ENCODE measurements at regions of chr17 and their contacts with region 1.

Region 1: DNA sequence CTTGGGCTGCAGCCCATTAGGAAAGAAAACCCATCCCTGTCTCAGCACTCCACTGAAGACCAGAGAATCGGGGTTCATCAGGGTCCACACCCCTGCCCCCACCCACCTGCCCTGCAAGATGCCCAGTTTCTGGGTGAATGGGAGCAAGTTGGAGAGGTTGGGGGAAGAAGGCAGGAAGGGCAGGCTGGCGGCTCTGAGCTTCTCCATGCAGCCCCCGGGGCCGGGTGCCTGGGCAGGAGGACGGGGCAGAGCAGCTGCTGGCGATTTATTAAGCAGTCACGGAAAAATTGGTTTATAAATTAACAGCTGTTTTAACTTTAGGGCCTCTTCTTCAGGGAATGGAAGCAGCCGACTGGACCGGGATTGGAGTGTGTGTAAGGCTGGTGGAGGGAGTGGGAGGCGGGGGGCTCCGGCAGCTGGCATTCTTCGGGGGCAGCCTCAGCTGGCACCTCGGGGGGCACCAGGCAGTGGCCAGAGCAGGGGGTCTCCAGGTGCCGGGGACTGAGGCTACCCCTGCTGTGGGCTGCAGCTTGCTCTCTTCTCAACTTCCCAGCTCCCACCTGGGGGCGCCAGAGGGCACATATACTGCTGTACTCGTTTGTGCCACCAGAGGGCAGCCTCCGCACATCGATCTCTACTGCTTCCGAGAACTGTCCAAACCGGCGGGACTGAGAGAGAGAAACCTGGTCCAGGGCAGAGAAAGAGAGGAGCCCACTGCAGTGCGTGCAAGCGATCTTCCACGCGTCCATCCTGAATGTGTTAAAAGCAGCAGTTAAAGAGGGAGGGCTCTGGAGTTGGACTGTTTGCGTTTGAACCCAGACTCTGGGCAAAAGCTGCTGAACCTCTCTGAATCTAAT is 5.0 kb upstream of the PPP1R1B start:
- DNase-seq: peak; percentile 56
- ATAC-seq: peak; percentile 79
- H3K4me3 ChIP-seq: peak overlapping the region; percentile 46; the same call in 1 of the 2 replicates
- H3K27ac ChIP-seq: no peak overlapping the region
- H3K4me1 ChIP-seq: peaks cover 5% of the 10 kb centered on the region
- H3K27me3 ChIP-seq: peaks cover 3 to 5% of the 10 kb centered on the region in 2 experiments
- CTCF ChIP-seq: peak; percentile 100; a peak in 5 of 6 replicates
- EP300 ChIP-seq: no peak
- POLR2A ChIP-seq: no peak
- RAD21 ChIP-seq: peak; percentile 95

Region 2: DNA sequence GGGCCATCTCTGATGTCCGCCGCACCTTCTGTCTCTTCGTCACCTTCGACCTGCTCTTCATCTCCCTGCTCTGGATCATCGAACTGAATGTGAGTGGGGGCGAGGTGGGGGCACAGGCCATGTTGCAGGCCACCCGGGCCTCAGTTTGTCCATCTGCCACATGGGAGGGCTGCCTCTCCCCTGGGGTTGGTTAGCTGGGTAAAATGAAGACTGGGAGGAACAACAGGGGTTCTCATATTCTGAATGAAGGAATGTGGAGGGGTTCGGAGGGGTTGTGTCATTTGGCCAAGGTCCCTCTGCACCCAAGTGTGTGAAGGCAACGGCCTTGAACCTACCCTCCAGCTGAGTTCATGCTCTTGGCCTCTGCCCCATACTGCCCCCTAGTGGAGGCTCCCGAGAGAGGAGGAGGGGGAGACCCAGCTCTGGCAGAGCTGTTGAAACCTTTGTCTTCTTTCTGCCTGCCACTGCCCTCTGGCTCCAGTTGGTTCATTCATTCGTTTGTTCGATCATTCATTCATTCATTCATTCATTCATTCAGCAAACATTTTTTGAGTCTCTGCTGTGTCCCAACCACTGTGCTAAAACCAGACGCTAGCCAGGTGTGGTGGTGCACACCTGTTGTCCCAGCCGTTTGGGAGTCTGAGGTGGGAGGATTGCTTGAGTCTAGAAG is 32.0 kb after region 1 on chr17:
- CTCF ChIA-PET with region 1: interaction called, 100 read pairs
- POLR2A ChIA-PET with region 1: no interaction called
- RAD21 ChIA-PET with region 1: interaction called, 8 read pairs
- SMC1A ChIA-PET with region 1: interaction called, 11 read pairs
- in situ Hi-C with region 1: no loop called
- intact Hi-C with region 1: no loop called
- DNase-seq: no peak
- ATAC-seq: peak; percentile 98
- H3K4me3 ChIP-seq: no peak overlapping the region
- H3K27ac ChIP-seq: no peak overlapping the region
- H3K4me1 ChIP-seq: peaks cover 5% of the 10 kb centered on the region; the same call in 1 of the 2 replicates
- H3K27me3 ChIP-seq: no peaks in the 10 kb centered on the region
- CTCF ChIP-seq: peak; percentile 74 to 96 (median 96)
- EP300 ChIP-seq: no peak
- POLR2A ChIP-seq: no peak
- RAD21 ChIP-seq: peak; percentile 54

Region 3: GRCh38 chr17:39687811-39688518 is 66.2 kb after region 1 on chr17 and contains the start of gene PGAP3:
- CTCF ChIA-PET with region 1: interaction called, 10 read pairs
- POLR2A ChIA-PET with region 1: no interaction called
- RAD21 ChIA-PET with region 1: interaction called, 3 read pairs
- SMC1A ChIA-PET with region 1: no interaction called
- in situ Hi-C with region 1: no loop called
- intact Hi-C with region 1: no loop called
- DNase-seq: peak; percentile 78
- ATAC-seq: peak; percentile 98
- H3K4me3 ChIP-seq: peak within 1 kb of the TSS; percentile 88
- H3K27ac ChIP-seq: peak within 1 kb of the TSS; percentile 74
- H3K4me1 ChIP-seq: peaks cover 3% of the 10 kb centered on the region; the same call in 1 of the 2 replicates
- H3K27me3 ChIP-seq: no peaks in the 10 kb centered on the region
- CTCF ChIP-seq: peak in 1 of 3 experiments; percentile 10; a peak in 2 of 6 replicates
- EP300 ChIP-seq: no peak
- POLR2A ChIP-seq: peak; percentile 94
- RAD21 ChIP-seq: no peak
- polyA plus RNA-seq, gene PGAP3: 0.21 to 1.2 TPM

Region 4: DNA sequence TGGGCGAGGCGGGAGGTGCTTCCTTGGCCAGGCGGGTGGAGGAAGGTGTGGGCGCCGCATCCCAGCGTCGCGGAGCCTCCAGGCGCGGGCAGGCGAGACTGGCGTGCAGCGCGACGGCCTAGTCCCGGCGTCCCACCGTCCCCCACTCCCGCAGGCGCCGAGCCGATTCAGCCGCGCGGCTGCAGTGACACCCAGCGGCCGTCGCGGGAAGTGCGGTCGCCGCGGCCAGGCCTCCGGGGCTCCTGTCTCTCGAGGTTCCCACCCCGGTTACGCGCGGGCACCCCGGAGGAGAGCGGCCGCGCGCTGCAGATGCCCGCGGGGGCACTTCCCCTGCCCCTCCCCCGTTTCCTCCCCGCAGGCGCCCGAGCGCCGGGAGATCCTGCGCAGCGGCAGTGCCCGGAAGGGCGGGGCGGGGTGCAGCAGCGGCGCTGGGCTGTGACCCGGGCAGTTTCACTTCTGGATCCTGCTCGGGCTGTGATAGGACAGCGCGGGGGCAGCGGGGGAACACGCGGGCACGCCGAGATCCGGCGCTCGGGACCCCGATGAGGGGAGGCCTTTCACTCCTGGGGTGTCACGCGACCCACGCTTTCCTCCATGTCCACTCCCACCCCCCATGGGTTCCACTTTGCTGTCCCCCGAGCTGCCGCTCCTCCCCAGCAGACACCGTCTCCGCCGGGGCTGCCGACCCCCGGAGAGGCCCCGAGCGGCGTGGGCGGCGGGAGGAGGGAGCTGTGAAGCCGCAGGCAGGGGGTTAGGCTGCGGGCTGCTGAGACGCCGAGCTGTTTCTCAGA is 132.6 kb after region 1 on chr17:
- CTCF ChIA-PET with region 1: interaction called, 24 read pairs
- POLR2A ChIA-PET with region 1: interaction called, 3 read pairs
- RAD21 ChIA-PET with region 1: interaction called, 23 read pairs
- SMC1A ChIA-PET with region 1: interaction called, 9 read pairs
- in situ Hi-C with region 1: loop called (anchors 5 kb)
- intact Hi-C with region 1: loop called (anchors 1 kb)
- DNase-seq: peak; percentile 87
- ATAC-seq: peak; percentile 82
- H3K4me3 ChIP-seq: peak overlapping the region; percentile 66
- H3K27ac ChIP-seq: peak overlapping the region; percentile 96
- H3K4me1 ChIP-seq: peaks cover 53% of the 10 kb centered on the region
- H3K27me3 ChIP-seq: no peaks in the 10 kb centered on the region
- CTCF ChIP-seq: peak; percentile 81 to 93 (median 88)
- EP300 ChIP-seq: peak; percentile 65 to 73; a peak in 3 of 4 replicates
- POLR2A ChIP-seq: peak; percentile 75
- RAD21 ChIP-seq: peak; percentile 80

Region 5: GRCh38 chr17:39963829-39964228 is 342.1 kb after region 1 on chr17:
- CTCF ChIA-PET with region 1: interaction called, 13 read pairs
- POLR2A ChIA-PET with region 1: no interaction called
- RAD21 ChIA-PET with region 1: no interaction called
- SMC1A ChIA-PET with region 1: interaction called, 4 read pairs
- in situ Hi-C with region 1: no loop called
- intact Hi-C with region 1: no loop called
- DNase-seq: no peak
- ATAC-seq: no peak
- H3K4me3 ChIP-seq: no peak overlapping the region
- H3K27ac ChIP-seq: no peak overlapping the region
- H3K4me1 ChIP-seq: no peaks in the 10 kb centered on the region; the same call in 1 of the 2 replicates
- H3K27me3 ChIP-seq: no peaks in the 10 kb centered on the region
- CTCF ChIP-seq: no peak
- EP300 ChIP-seq: no peak
- POLR2A ChIP-seq: no peak
- RAD21 ChIP-seq: no peak